Activated naive CD4-positive, alpha-beta T cell treated with anti-CD3 and anti-CD28 coated beads for 36 hours (primary cell): ENCODE measurements at regions of chr10 and their contacts with region 1.

Region 1: DNA sequence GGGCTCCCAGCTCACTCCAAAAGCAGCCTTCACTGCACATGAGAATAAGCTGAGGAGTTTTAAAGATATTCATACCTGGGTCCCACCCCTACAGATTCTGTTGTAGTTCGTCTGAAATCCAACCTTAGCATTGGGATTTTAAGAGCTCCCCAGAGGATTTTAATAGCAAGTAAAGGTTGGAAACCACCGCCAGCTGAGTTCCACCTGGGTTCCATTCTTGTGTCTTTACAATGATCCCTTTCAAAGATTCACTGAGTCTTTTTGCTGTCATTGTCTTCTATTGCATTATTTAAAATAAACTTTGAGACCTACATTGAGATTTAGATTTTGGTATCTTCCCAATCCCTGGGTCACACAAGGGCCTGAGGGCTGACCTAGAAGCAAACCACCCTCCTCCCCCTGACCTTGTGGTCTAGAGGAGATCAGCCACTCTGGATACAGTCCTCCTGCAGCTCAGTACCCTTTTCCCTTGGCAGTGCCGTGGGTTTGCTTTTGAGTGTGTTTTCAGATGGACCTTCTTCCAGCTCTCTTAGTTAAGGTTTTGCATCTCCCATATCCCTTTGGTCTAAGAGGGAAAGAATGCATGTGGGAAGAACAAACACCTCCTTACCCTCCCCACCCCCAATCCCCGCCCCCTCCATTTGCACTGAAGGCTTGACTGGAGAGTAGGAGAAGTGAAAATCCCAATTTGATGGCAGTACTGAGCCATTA is 22.6 kb upstream of the SIRT1 start:
- DNase-seq: no peak
- H3K4me3 Mint-ChIP-seq: no peak overlapping the region
- H3K27ac Mint-ChIP-seq: no peak overlapping the region
- H3K4me1 Mint-ChIP-seq: no peaks in the 10 kb centered on the region
- H3K27me3 Mint-ChIP-seq: no peaks in the 10 kb centered on the region

Region 2: DNA sequence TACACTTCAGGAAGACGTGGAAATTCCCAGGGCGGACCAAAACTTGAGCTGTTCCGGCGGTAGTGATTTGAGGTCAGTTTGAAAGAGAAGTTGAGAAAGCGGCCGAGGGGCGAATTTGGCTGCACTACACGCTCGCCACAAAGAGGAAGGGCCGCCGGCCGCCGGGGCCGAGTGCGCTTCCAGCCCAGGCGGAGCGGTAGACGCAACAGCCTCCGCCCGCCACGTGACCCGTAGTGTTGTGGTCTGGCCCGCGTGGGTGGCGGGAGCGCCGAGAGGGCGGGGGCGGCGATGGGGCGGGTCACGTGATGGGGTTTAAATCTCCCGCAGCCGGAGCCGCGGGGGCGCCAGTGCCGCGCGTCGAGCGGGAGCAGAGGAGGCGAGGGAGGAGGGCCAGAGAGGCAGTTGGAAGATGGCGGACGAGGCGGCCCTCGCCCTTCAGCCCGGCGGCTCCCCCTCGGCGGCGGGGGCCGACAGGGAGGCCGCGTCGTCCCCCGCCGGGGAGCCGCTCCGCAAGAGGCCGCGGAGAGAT is 22.5 kb after region 1 on chr10 and contains the start of gene SIRT1:
- CTCF ChIA-PET with region 1: interaction called, 12 read pairs
- intact Hi-C with region 1: no loop called
- DNase-seq: peak; percentile 88
- H3K4me3 Mint-ChIP-seq: peak within 1 kb of the TSS; percentile 90
- H3K27ac Mint-ChIP-seq: peak within 1 kb of the TSS; percentile 89
- H3K4me1 Mint-ChIP-seq: peaks cover 25% of the 10 kb centered on the region
- H3K27me3 Mint-ChIP-seq: no peaks in the 10 kb centered on the region
- total RNA-seq, gene SIRT1: 18.7 to 18.8 TPM

Region 3: DNA sequence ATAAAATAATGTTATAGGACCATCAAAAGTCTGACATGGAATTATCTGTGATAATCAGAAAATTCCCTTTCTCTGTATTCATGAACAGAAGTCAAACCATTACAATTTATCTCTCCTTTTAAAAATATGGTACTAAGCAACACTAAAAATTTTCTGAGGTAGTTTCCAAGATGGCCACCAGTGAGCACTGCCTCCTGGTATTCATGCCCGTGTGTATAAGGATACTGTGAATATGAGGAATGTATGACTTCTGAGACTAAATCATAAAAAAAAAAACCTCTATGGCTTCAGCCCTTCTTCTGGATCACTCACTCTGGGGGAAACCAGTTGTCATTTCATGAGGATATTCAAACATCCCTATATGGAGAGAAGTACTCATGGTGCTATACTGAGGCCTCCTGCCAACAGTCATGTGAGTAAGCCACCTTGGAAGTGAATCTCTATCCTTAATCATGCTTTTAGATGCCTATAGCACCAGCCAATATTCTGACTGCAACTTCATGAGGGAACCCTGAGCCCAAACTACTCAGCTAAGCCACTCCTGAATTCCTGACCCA is 63.6 kb after region 1 on chr10:
- CTCF ChIA-PET with region 1: no interaction called
- intact Hi-C with region 1: no loop called
- DNase-seq: no peak
- H3K4me3 Mint-ChIP-seq: no peak overlapping the region
- H3K27ac Mint-ChIP-seq: no peak overlapping the region
- H3K4me1 Mint-ChIP-seq: no peaks in the 10 kb centered on the region
- H3K27me3 Mint-ChIP-seq: no peaks in the 10 kb centered on the region

Region 4: DNA sequence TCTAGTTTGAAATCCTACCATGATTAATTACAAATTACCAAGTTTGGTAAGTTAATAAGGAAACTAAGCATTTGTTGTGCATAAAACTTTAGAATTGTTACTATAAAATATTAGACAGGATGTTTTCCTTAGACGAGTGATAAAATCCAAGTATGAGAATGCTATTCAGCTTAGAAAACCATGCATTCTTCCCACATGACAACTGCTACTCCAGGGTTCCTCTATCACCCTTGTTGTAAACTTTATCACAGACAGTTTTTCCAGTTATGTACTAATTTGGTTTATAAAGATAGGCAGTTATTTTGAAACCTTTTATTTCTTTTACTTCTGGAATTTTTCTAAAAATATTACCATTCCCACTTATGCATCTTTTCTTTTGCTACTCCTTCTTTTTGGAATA is 74.5 kb after region 1 on chr10:
- CTCF ChIA-PET with region 1: no interaction called
- intact Hi-C with region 1: no loop called
- DNase-seq: no peak
- H3K4me3 Mint-ChIP-seq: no peak overlapping the region
- H3K27ac Mint-ChIP-seq: no peak overlapping the region
- H3K4me1 Mint-ChIP-seq: no peaks in the 10 kb centered on the region
- H3K27me3 Mint-ChIP-seq: no peaks in the 10 kb centered on the region

Region 5: GRCh38 chr10:68348265-68348741 is 486.4 kb after region 1 on chr10:
- CTCF ChIA-PET with region 1: interaction called, 3 read pairs
- intact Hi-C with region 1: loop called (anchors 5 kb)
- DNase-seq: peak; percentile 63
- H3K4me3 Mint-ChIP-seq: no peak overlapping the region
- H3K27ac Mint-ChIP-seq: no peak overlapping the region
- H3K4me1 Mint-ChIP-seq: peaks cover 10% of the 10 kb centered on the region
- H3K27me3 Mint-ChIP-seq: no peaks in the 10 kb centered on the region